ENCODE measurements at regions of chr15 and their contacts with region 1.

Region 1: DNA sequence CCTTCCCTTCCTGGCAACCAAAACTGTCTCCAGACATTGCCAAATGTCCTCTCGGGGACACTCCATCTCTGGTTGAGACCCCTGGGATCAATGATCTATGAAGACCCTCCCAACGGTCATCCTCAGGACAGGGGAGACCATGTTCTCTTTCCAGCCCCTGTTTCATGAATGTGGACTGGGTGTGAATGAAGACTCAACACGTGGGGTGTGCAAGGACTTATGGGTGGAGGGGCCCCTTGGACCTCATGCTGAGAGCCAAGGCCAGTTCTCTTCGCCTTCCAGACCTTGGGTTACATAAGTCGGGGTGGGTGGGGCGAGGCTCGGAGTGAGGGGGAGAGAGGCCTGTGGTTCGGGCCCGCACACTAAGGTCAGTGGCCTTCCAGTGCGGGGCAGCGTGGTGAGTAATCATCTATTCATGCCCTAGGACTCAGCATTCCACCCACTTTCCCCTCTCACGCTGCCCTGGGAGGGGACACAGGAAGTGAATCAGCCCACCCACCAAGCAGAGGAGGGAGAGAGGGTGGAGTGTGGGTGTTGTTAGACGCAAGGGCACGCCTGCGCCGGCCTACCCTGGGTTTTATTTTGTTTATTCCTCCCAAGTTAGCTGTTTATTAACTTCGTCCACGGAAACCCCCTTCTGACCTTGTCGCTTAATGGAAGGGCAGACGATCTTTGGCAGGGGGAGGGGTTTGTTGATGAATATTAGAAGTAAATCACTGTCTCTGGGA is 6.7 kb downstream of the PAQR5 start:
- DNase-seq: peak; percentile 98
- H3K4me3 Mint-ChIP-seq: peak overlapping the region; percentile 35
- H3K27ac Mint-ChIP-seq: peak overlapping the region; percentile 96
- H3K4me1 Mint-ChIP-seq: peaks cover 46% of the 10 kb centered on the region
- H3K27me3 Mint-ChIP-seq: no peaks in the 10 kb centered on the region
- CTCF ChIP-seq: no peak

Region 2: DNA sequence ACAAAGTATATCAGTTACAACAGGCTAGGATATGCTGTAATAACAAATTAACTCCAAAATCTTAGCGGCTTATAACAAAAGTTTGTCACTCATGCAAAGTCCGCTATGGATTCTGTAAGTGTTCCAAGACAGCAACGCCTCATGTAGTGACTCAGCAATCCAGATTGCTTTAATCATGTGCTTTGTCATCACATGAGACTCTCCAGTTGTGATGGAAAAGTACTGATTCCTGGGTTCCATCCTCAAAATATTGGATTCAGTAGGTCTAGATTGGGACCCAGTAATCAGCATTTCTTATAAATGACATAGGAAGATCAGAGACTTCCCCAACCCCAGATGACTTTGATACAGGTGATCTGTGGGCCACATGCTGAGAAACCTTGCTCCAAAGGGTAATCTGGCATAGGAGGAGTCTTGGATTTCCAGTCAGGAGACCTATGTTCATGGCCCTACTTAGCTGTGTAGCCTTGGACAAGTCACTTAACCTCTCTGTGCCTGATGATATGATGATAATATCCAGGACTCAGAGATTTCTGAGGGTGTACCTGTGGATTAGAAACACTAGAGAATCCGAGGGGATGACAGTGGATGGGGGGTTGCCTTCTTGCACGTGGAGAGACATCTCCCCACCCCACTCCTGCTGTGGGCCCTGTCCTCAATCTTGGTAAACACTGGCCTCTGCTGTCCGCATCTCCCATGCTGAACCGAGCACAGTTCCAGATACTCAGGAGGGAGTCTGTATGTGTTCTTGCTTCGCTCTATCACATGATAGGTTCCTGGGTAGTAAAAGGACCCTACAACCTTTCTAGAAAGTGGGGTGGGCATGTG is 661.1 kb before region 1 on chr15:
- CTCF ChIA-PET with region 1: no interaction called
- POLR2A ChIA-PET with region 1: no interaction called
- intact Hi-C with region 1: no loop called
- DNase-seq: peak; percentile 51
- H3K4me3 Mint-ChIP-seq: no peak overlapping the region
- H3K27ac Mint-ChIP-seq: no peak overlapping the region
- H3K4me1 Mint-ChIP-seq: peaks cover 16% of the 10 kb centered on the region
- H3K27me3 Mint-ChIP-seq: no peaks in the 10 kb centered on the region
- CTCF ChIP-seq: no peak

Region 3: GRCh38 chr15:69290346-69291164 is 14.8 kb before region 1 on chr15:
- CTCF ChIA-PET with region 1: interaction called, 3 read pairs
- POLR2A ChIA-PET with region 1: interaction called, 10 read pairs
- intact Hi-C with region 1: no loop called
- DNase-seq: no peak
- H3K4me3 Mint-ChIP-seq: no peak overlapping the region
- H3K27ac Mint-ChIP-seq: no peak overlapping the region
- H3K4me1 Mint-ChIP-seq: no peaks in the 10 kb centered on the region
- H3K27me3 Mint-ChIP-seq: no peaks in the 10 kb centered on the region
- CTCF ChIP-seq: no peak

Measured in MCF 10A (cell line).